ENCODE measurements at regions of chr6 and their contacts with region 1.

Region 1: GRCh38 chr6:70857387-70858077 is 99.3 kb downstream of the B3GAT2 start:
- DNase-seq: no peak
- H3K27ac ChIP-seq: no peak overlapping the region
- CTCF ChIP-seq: no peak

Region 2: GRCh38 chr6:70844301-70844700 is 13.2 kb before region 1 on chr6:
- CTCF ChIA-PET with region 1: interaction called, 3 read pairs
- POLR2A ChIA-PET with region 1: interaction called, 18 read pairs
- DNase-seq: no peak
- H3K27ac ChIP-seq: no peak overlapping the region
- CTCF ChIP-seq: no peak

Region 3: GRCh38 chr6:71011801-71012440 is 154.4 kb after region 1 on chr6:
- CTCF ChIA-PET with region 1: interaction called, 10 read pairs
- POLR2A ChIA-PET with region 1: no interaction called
- DNase-seq: no peak
- H3K27ac ChIP-seq: no peak overlapping the region
- CTCF ChIP-seq: no peak